GM12878 (cell line): ENCODE measurements at regions of chr14 and their contacts with region 1.

Region 1: GRCh38 chr14:89242652-89243279 is 174.3 kb downstream of the FOXN3 start:
- DNase-seq: no peak
- ATAC-seq: no peak
- H3K4me3 ChIP-seq: no peak overlapping the region
- H3K27ac ChIP-seq: no peak overlapping the region
- H3K4me1 ChIP-seq: peaks cover 14% of the 10 kb centered on the region
- H3K27me3 ChIP-seq: no peaks in the 10 kb centered on the region
- CTCF ChIP-seq: no peak
- EP300 ChIP-seq: no peak
- POLR2A ChIP-seq: no peak
- RAD21 ChIP-seq: no peak

Region 2: GRCh38 chr14:88710702-88711101 is 532.1 kb before region 1 on chr14:
- CTCF ChIA-PET with region 1: no interaction called
- POLR2A ChIA-PET with region 1: no interaction called
- RAD21 ChIA-PET with region 1: no interaction called
- SMC1A ChIA-PET with region 1: no interaction called
- in situ Hi-C with region 1: no loop called
- intact Hi-C with region 1: no loop called
- DNase-seq: no peak
- ATAC-seq: no peak
- H3K4me3 ChIP-seq: no peak overlapping the region
- H3K27ac ChIP-seq: no peak overlapping the region
- H3K4me1 ChIP-seq: no peaks in the 10 kb centered on the region
- H3K27me3 ChIP-seq: no peaks in the 10 kb centered on the region
- CTCF ChIP-seq: no peak
- EP300 ChIP-seq: no peak
- POLR2A ChIP-seq: no peak
- RAD21 ChIP-seq: no peak

Region 3: GRCh38 chr14:89221109-89221810 is 21.5 kb before region 1 on chr14:
- CTCF ChIA-PET with region 1: no interaction called
- POLR2A ChIA-PET with region 1: no interaction called
- RAD21 ChIA-PET with region 1: no interaction called
- SMC1A ChIA-PET with region 1: no interaction called
- in situ Hi-C with region 1: no loop called
- intact Hi-C with region 1: no loop called
- DNase-seq: no peak
- ATAC-seq: no peak; the same call in 2 of the 3 replicates
- H3K4me3 ChIP-seq: no peak overlapping the region
- H3K27ac ChIP-seq: no peak overlapping the region
- H3K4me1 ChIP-seq: no peaks in the 10 kb centered on the region
- H3K27me3 ChIP-seq: no peaks in the 10 kb centered on the region
- CTCF ChIP-seq: no peak
- EP300 ChIP-seq: no peak
- POLR2A ChIP-seq: no peak
- RAD21 ChIP-seq: no peak

Region 4: GRCh38 chr14:89258728-89259273 is 16.0 kb after region 1 on chr14:
- CTCF ChIA-PET with region 1: interaction called, 4 read pairs
- POLR2A ChIA-PET with region 1: no interaction called
- RAD21 ChIA-PET with region 1: no interaction called
- SMC1A ChIA-PET with region 1: interaction called, 10 read pairs
- in situ Hi-C with region 1: no loop called
- intact Hi-C with region 1: no loop called
- DNase-seq: no peak
- ATAC-seq: peak; percentile 89
- H3K4me3 ChIP-seq: no peak overlapping the region
- H3K27ac ChIP-seq: no peak overlapping the region
- H3K4me1 ChIP-seq: no peaks in the 10 kb centered on the region; the same call in 1 of the 2 replicates
- H3K27me3 ChIP-seq: no peaks in the 10 kb centered on the region
- CTCF ChIP-seq: no peak
- EP300 ChIP-seq: no peak
- POLR2A ChIP-seq: no peak
- RAD21 ChIP-seq: no peak

Region 5: GRCh38 chr14:89317051-89317691 is 74.4 kb after region 1 on chr14:
- CTCF ChIA-PET with region 1: no interaction called
- POLR2A ChIA-PET with region 1: no interaction called
- RAD21 ChIA-PET with region 1: no interaction called
- SMC1A ChIA-PET with region 1: no interaction called
- in situ Hi-C with region 1: no loop called
- intact Hi-C with region 1: no loop called
- DNase-seq: no peak
- ATAC-seq: peak; percentile 88
- H3K4me3 ChIP-seq: peak overlapping the region; percentile 22; the same call in 1 of the 2 replicates
- H3K27ac ChIP-seq: peak overlapping the region; percentile 71
- H3K4me1 ChIP-seq: peaks cover 14% of the 10 kb centered on the region
- H3K27me3 ChIP-seq: no peaks in the 10 kb centered on the region; a peak in 1 of 4 replicates
- CTCF ChIP-seq: no peak
- EP300 ChIP-seq: no peak
- POLR2A ChIP-seq: no peak
- RAD21 ChIP-seq: no peak